ENCODE measurements at regions of chr2 and their contacts with region 1.

Region 1: DNA sequence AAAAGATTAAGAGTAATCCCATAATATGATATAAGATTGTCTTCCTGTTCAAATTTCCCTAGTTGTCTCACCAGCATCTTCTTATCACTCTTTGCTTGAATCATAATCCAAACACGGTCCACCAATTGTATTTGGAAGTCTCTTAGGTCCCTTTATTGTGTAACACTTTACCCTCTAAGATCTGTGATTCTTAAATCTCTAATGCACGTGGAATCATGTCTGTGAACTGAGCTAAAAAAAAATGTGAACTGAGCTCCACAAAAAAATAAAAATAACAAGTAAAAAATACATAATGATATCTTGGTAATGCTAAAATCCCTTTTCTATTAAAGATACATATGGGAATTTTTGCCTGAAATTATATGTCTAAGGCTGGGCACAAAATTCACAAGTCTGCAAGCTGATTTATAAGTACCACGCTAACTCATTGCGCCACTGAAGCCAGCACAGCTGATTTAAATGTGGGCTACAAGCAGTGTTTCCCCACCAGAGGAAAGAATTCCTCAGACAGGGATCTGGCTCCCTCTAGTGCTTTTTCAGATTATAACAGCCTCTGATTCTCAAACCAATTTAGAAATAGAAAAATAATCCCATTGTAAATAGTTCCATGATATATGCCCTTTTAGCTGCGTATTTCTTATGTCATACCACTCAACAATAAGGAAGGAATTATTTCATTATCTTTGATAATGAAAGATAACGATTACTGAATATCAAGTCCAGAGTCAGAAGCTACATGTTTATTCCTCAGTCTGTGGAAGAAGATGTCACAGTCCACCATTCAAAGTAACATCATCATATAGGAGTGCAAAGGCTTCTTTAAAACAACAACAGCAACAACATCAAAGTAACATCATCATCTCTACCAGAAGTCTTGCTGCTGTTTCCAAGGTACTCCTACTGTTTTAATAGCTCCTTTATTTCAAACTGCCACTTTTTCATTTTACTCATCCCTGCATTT is 22.9 kb downstream of the RBM43 start:
- DNase-seq: peak; percentile 86
- H3K4me3 ChIP-seq: no peak overlapping the region
- H3K27ac ChIP-seq: peak overlapping the region; percentile 43
- H3K27me3 ChIP-seq: no peaks in the 10 kb centered on the region
- CTCF ChIP-seq: peak; percentile 72

Region 2: DNA sequence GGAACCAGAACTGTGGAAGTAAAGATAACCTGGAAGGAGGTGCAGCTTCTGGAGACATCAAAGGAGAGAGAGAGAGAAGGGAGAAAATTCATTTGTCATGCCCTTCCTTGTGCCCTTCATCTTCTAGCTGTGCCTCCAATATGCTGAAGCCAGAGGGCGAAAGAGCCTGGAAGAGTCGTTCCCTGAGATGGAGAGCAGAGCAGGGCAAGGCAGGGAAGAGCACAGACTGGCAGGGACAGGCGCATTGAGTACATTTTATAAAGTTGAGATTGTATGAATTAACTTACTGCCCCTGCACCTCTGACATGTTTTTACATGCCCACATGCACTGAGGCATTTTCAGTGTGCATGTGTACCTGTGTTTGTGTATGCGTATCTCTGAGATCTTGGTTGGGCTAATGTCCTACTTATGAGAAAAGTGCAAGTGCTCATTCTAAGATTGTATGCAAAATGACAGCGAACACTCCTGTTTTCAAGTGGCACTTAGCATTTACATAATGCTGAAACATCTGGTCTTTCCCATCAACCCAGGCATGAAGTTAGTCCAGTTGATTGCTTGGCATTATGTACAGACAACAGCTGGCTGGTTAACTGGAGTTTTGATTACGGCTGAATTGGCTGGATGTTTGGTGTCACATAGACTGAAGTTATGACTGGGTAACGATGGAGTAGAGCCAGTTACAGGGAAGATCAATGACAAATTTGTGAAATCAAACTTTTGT is 1627.5 kb before region 1 on chr2:
- in situ Hi-C with region 1: loop called (anchors 25 kb)
- DNase-seq: no peak
- H3K4me3 ChIP-seq: no peak overlapping the region
- H3K27ac ChIP-seq: no peak overlapping the region
- H3K27me3 ChIP-seq: no peaks in the 10 kb centered on the region
- CTCF ChIP-seq: peak; percentile 47

Region 3: DNA sequence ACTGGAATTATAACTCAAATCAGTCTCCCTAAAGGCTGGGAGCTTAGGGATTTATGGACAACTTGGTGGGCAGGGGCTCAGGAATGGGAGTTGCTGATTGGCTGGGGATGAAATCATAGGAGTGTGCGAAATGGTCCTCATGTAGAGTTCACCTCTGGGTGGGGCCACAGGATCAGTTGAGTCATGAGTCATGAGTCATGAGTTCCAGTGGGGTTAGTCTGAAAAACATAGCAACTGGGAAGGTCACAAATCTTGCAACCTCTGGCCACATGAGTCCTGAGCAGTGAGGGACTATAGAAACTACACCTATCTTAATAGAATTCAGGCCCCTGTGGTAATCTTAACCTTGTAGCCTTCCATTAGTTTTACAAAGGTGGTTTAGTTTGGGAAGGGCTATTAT is 360.5 kb before region 1 on chr2:
- in situ Hi-C with region 1: no loop called
- DNase-seq: peak; percentile 38
- H3K4me3 ChIP-seq: no peak overlapping the region
- H3K27ac ChIP-seq: no peak overlapping the region
- H3K27me3 ChIP-seq: no peaks in the 10 kb centered on the region
- CTCF ChIP-seq: no peak

Measured in brain microvascular endothelial cell (primary cell).